Mammary epithelial cell (primary cell): ENCODE measurements at regions of chr14 and their contacts with region 1.

Region 1: GRCh38 chr14:103576371-103577024 is 13.7 kb downstream of the COA8 start:
- DNase-seq: peak; percentile 83
- H3K4me3 ChIP-seq: no peak overlapping the region
- H3K27ac ChIP-seq: peak overlapping the region; percentile 60
- H3K4me1 ChIP-seq: peaks cover 19% of the 10 kb centered on the region
- H3K27me3 ChIP-seq: no peaks in the 10 kb centered on the region
- CTCF ChIP-seq: no peak

Region 2: GRCh38 chr14:103628221-103628683 is 51.8 kb after region 1 on chr14:
- CTCF ChIA-PET with region 1: no interaction called
- dilution Hi-C with region 1: no loop called
- in situ Hi-C with region 1: no loop called
- intact Hi-C with region 1: no loop called
- DNase-seq: peak; percentile 90
- H3K4me3 ChIP-seq: peak overlapping the region; percentile 82 to 94 (median 90)
- H3K27ac ChIP-seq: peak overlapping the region; percentile 94
- H3K4me1 ChIP-seq: peaks cover 41% of the 10 kb centered on the region
- H3K27me3 ChIP-seq: no peaks in the 10 kb centered on the region
- CTCF ChIP-seq: no peak

Region 3: DNA sequence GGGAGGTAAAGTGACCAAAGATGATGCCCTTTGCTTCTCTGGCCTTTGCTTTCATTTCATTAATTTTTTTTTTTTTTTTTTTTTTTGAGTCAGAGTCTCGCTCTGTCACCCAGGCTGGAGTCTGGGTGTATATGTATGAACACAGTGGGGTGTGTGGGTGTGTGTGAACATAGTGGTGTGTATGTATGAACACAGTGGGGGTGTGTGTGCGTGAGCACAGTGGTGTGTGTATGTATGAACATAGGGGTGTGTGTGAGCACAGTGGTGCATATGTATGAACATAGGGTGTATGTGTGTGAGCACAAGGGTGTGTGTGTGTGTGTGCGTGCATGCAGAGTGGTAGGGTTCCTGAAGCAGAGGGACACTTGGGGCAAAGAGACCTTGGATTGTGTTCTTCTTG is 62.1 kb after region 1 on chr14:
- CTCF ChIA-PET with region 1: no interaction called
- dilution Hi-C with region 1: loop called (anchors 5 kb)
- in situ Hi-C with region 1: no loop called
- intact Hi-C with region 1: no loop called
- DNase-seq: no peak
- H3K4me3 ChIP-seq: no peak overlapping the region
- H3K27ac ChIP-seq: no peak overlapping the region
- H3K4me1 ChIP-seq: peaks cover 10% of the 10 kb centered on the region
- H3K27me3 ChIP-seq: no peaks in the 10 kb centered on the region
- CTCF ChIP-seq: no peak

Region 4: DNA sequence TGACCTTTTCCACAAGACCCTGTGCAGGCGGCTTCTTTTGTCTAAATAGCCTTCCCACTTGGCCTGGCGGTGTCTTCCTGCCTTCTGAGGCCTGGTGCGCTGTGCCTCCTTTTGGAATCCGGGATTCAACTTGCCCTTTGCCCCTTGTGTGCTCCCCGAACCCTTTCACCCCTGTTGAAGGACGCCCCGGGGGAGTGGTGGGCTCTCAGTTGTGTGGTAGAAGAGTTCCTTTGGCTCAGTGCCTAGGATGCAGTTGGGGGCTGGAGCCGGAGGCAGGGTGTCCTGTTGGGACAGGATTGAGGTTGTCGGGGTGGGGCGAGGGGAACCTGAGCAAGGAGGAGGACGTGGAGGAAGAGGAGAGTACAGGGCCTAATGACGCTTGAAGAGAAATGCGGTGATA is 87.0 kb after region 1 on chr14:
- CTCF ChIA-PET with region 1: no interaction called
- dilution Hi-C with region 1: no loop called
- in situ Hi-C with region 1: no loop called
- intact Hi-C with region 1: no loop called
- DNase-seq: no peak
- H3K4me3 ChIP-seq: no peak overlapping the region
- H3K27ac ChIP-seq: no peak overlapping the region
- H3K4me1 ChIP-seq: peaks cover 14% of the 10 kb centered on the region
- H3K27me3 ChIP-seq: no peaks in the 10 kb centered on the region
- CTCF ChIP-seq: no peak

Region 5: GRCh38 chr14:103679351-103679750 is 102.9 kb after region 1 on chr14:
- CTCF ChIA-PET with region 1: no interaction called
- dilution Hi-C with region 1: no loop called
- in situ Hi-C with region 1: no loop called
- intact Hi-C with region 1: loop called (anchors 5 kb)
- DNase-seq: no peak
- H3K4me3 ChIP-seq: no peak overlapping the region
- H3K27ac ChIP-seq: no peak overlapping the region
- H3K4me1 ChIP-seq: no peaks in the 10 kb centered on the region
- H3K27me3 ChIP-seq: no peaks in the 10 kb centered on the region
- CTCF ChIP-seq: peak; percentile 6 to 27

Region 6: DNA sequence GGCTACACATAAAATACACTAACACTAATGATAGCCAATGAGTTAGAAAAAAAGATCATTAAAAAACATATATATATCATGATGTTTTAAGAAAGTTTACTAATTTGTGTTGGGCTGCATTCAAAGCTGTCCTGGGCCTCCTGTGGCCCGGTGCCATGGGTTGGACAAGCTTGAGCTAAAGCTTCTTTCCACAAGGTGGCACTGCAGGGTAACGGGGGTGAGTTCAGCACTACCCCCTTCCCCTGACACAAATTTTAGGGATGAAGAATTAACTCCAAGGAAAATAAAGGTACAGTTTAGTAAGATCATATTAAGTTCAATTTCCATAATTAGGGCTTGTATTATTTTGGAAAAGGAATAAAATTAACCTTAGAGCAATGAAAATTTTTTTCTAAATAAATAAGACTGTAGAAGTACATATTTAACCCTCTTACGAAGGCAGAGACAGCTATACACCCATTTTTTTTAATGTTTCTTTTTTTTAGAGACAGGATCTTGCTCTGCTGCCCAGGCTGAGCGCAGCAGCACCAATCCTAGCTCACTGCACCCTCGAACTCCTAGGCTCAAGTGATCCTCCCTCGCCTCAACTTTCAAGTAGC is 232.0 kb after region 1 on chr14:
- CTCF ChIA-PET with region 1: no interaction called
- dilution Hi-C with region 1: no loop called
- in situ Hi-C with region 1: no loop called
- intact Hi-C with region 1: loop called (anchors 5 kb)
- DNase-seq: peak; percentile 54
- H3K4me3 ChIP-seq: no peak overlapping the region
- H3K27ac ChIP-seq: no peak overlapping the region
- H3K4me1 ChIP-seq: peaks cover 11% of the 10 kb centered on the region
- H3K27me3 ChIP-seq: no peaks in the 10 kb centered on the region
- CTCF ChIP-seq: peak; percentile 83 to 92

Region 7: GRCh38 chr14:103989964-103990363 is 413.5 kb after region 1 on chr14:
- CTCF ChIA-PET with region 1: no interaction called
- dilution Hi-C with region 1: no loop called
- in situ Hi-C with region 1: no loop called
- intact Hi-C with region 1: loop called (anchors 10 kb)
- DNase-seq: no peak
- H3K4me3 ChIP-seq: no peak overlapping the region
- H3K27ac ChIP-seq: no peak overlapping the region
- H3K4me1 ChIP-seq: no peaks in the 10 kb centered on the region
- H3K27me3 ChIP-seq: no peaks in the 10 kb centered on the region
- CTCF ChIP-seq: no peak

Region 8: GRCh38 chr14:104054222-104054905 is 477.9 kb after region 1 on chr14:
- CTCF ChIA-PET with region 1: no interaction called
- dilution Hi-C with region 1: no loop called
- in situ Hi-C with region 1: no loop called
- intact Hi-C with region 1: no loop called
- DNase-seq: no peak
- H3K4me3 ChIP-seq: no peak overlapping the region
- H3K27ac ChIP-seq: no peak overlapping the region
- H3K4me1 ChIP-seq: no peaks in the 10 kb centered on the region
- H3K27me3 ChIP-seq: no peaks in the 10 kb centered on the region
- CTCF ChIP-seq: no peak